ENCODE measurements at regions of chr13 and their contacts with region 1.

Region 1: GRCh38 chr13:29457299-29457698 is 138.2 kb downstream of the SLC7A1 start:
- DNase-seq: peak; percentile 82
- H3K4me3 Mint-ChIP-seq: no peak overlapping the region
- H3K27ac Mint-ChIP-seq: no peak overlapping the region
- H3K4me1 Mint-ChIP-seq: peaks cover 26% of the 10 kb centered on the region
- H3K27me3 Mint-ChIP-seq: no peaks in the 10 kb centered on the region
- CTCF ChIP-seq: no peak

Region 2: DNA sequence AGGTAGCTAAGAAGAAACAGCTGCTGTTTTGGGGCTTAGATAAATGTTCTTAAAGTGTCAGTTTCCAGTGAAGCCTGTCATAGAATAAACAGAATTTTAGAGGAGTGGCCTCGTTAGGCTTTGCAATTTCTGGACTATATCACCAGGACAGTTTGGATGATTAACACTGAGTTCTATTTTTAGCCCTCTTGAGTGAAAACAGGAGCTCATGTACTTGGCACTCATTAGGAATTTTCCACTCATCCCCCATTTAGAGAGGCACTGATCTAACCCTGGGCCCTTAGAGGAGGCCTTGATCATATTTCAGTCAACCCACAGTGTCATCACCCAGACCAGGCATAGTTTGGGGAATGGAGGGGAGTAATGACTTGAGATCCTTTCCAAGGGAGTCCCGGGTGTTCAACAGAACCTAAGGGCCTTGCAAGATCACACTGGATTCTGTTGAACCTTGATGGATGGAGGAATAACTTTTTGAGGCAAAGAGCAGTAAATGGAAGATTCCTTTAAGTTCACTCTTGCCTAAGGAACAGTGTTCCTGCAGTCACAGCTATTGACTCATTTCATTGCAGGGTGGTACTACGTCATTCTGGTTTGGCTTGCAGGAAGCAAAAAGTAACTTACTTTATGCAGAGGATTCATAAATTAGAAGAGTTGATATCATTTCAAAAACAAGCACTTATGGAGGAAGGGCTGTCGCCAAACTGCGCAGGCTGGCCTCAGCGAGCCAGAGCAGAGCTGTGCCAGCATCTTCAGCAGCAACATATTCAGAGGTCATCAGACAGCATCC is 22.0 kb before region 1 on chr13:
- CTCF ChIA-PET with region 1: interaction called, 4 read pairs
- POLR2A ChIA-PET with region 1: interaction called, 7 read pairs
- intact Hi-C with region 1: loop called (anchors 2 kb)
- DNase-seq: peak; percentile 74
- H3K4me3 Mint-ChIP-seq: peak overlapping the region; percentile 22
- H3K27ac Mint-ChIP-seq: peak overlapping the region; percentile 77
- H3K4me1 Mint-ChIP-seq: peaks cover 25% of the 10 kb centered on the region
- H3K27me3 Mint-ChIP-seq: no peaks in the 10 kb centered on the region
- CTCF ChIP-seq: no peak

Measured in MCF 10A (cell line).